Activated CD4-positive, alpha-beta T cell treated with anti-CD3 and anti-CD28 coated beads, Interleukin-2, amount 10 ng/mL, durations not matched to agents 24 days and 14 days (primary cell): ENCODE measurements at regions of chr12 and their contacts with region 1.

Region 1: DNA sequence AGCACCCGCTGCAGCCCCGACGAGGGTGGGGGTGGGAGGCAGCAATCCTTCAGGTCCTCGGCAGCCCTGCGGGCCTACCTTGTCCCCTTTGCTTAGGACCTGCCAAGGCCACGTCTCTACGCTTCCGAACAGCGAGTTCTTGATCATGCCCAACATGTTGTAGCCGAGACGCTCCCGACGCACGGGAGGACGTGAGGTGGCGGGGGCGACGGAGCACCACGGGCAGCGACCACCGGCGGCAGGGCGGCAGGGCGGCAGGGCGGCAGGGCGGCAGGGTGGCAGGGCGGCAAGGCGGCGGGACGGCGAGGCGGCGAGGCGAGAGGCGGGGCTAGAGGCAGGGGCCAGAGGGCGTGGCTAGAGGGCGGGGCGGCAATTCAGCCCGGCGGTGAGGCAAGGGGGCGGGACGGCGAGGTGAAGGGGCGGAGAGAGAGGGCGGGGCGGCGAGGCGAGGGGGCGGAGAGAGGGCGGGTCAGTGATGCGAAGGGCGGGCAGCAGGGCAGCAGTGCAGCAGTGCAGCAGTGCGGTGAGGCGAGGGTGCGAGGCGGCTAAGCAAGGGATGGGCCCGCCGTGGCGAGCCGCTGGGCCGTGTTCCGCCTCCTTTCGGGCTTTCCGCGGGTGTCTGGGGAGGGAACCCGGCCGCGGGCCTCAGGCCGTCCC is at the start of gene HEBP1:
- DNase-seq: peak; percentile 98
- H3K4me3 Mint-ChIP-seq: peak within 1 kb of the TSS; percentile 91
- H3K27ac Mint-ChIP-seq: peak within 1 kb of the TSS; percentile 89
- H3K4me1 Mint-ChIP-seq: peaks cover 30% of the 10 kb centered on the region
- H3K27me3 Mint-ChIP-seq: peaks cover 25% of the 10 kb centered on the region
- total RNA-seq, gene HEBP1: 12.0 and 13.8 TPM in 2 replicates

Region 2: GRCh38 chr12:12616512-12617310 is 383.4 kb before region 1 on chr12:
- intact Hi-C with region 1: no loop called
- DNase-seq: no peak
- H3K4me3 Mint-ChIP-seq: peak overlapping the region; percentile 35
- H3K27ac Mint-ChIP-seq: peak overlapping the region; percentile 68
- H3K4me1 Mint-ChIP-seq: peaks cover 39% of the 10 kb centered on the region
- H3K27me3 Mint-ChIP-seq: no peaks in the 10 kb centered on the region

Region 3: GRCh38 chr12:13044002-13044905 is 44.2 kb after region 1 on chr12 and contains the start of gene FAM234B:
- intact Hi-C with region 1: loop called (anchors 1 kb)
- DNase-seq: peak; percentile 92
- H3K4me3 Mint-ChIP-seq: peak within 1 kb of the TSS; percentile 84
- H3K27ac Mint-ChIP-seq: peak within 1 kb of the TSS; percentile 75
- H3K4me1 Mint-ChIP-seq: peaks cover 19% of the 10 kb centered on the region
- H3K27me3 Mint-ChIP-seq: peaks cover 29% of the 10 kb centered on the region
- total RNA-seq, gene FAM234B: 8.6 and 9.0 TPM in 2 replicates